Caco-2 (cell line): ENCODE measurements at regions of chr14 and their contacts with region 1.

Region 1: DNA sequence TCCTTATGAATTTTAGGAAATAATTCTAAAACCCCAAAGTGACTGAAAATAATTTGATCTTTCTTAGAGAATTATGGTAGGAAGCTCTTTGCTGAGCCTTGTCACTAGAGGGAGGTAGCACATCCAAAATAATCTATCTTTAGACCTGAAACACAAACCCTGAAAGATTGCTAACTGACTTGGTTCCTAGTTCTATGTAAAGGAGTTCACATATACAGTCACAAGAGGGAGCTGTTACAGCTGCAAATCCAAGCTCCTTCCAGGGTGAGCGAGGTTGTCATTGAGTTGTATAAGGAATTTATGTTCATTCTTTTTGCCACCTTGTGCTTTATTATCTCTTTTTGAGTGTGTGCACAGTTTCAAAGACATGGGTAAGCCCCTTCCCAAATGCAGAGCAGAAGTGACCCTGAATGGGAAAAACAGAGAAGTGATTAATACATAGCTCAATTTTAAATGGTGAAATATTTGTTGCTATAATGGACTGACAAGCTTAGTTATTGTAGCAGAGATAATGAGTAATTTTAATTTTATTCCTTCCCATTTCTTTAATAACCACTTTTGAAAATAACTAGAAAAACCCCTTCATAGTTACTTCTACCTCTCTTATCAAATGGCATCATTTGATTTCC is 387.9 kb downstream of the DAD1 start:
- DNase-seq: peak in 1 of 2 experiments; percentile 57
- H3K4me3 ChIP-seq: no peak overlapping the region
- H3K4me3 Mint-ChIP-seq: no peak overlapping the region
- H3K27ac Mint-ChIP-seq: no peak overlapping the region
- H3K4me1 ChIP-seq: no peaks in the 10 kb centered on the region; the same call in 1 of the 2 replicates
- H3K4me1 Mint-ChIP-seq: no peaks in the 10 kb centered on the region
- H3K27me3 ChIP-seq: no peaks in the 10 kb centered on the region
- H3K27me3 Mint-ChIP-seq: no peaks in the 10 kb centered on the region
- CTCF ChIP-seq: peak; percentile 55 to 84

Region 2: GRCh38 chr14:22122227-22122818 is 78.8 kb before region 1 on chr14:
- CTCF ChIA-PET with region 1: interaction called, 18 read pairs
- POLR2A ChIA-PET with region 1: no interaction called
- intact Hi-C with region 1: no loop called
- DNase-seq: peak; percentile 27 to 37
- H3K4me3 ChIP-seq: no peak overlapping the region
- H3K4me3 Mint-ChIP-seq: no peak overlapping the region
- H3K27ac Mint-ChIP-seq: no peak overlapping the region
- H3K4me1 ChIP-seq: no peaks in the 10 kb centered on the region
- H3K4me1 Mint-ChIP-seq: peaks cover 7% of the 10 kb centered on the region
- H3K27me3 ChIP-seq: no peaks in the 10 kb centered on the region
- H3K27me3 Mint-ChIP-seq: peaks cover 14% of the 10 kb centered on the region
- CTCF ChIP-seq: peak; percentile 27 to 54

Region 3: DNA sequence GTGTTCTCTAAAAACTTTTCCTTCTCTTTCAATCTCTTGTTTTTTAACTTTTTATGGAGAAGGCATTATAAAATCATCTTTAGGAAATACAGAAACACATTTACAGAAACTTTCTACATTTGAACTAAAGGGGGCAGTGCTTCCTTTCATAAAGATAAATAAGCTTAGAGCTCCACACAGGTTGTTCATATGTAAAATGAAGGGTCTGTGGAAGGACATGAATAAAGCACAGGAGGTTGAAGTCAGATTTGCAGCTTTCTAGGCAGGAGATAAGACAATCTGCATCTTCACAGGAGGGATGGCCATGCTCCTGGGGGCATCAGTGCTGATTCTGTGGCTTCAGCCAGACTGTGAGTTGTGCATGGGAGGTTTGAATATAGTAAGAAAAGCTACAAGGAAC is 38.0 kb before region 1 on chr14:
- CTCF ChIA-PET with region 1: interaction called, 22 read pairs
- POLR2A ChIA-PET with region 1: no interaction called
- intact Hi-C with region 1: loop called (anchors 2 kb)
- DNase-seq: no peak
- H3K4me3 ChIP-seq: no peak overlapping the region
- H3K4me3 Mint-ChIP-seq: no peak overlapping the region
- H3K27ac Mint-ChIP-seq: no peak overlapping the region
- H3K4me1 ChIP-seq: peaks cover 8% of the 10 kb centered on the region; the same call in 1 of the 2 replicates
- H3K4me1 Mint-ChIP-seq: no peaks in the 10 kb centered on the region
- H3K27me3 ChIP-seq: no peaks in the 10 kb centered on the region
- H3K27me3 Mint-ChIP-seq: no peaks in the 10 kb centered on the region
- CTCF ChIP-seq: peak; percentile 21 to 35

Region 4: GRCh38 chr14:22265319-22266137 is 64.4 kb after region 1 on chr14:
- CTCF ChIA-PET with region 1: interaction called, 17 read pairs
- POLR2A ChIA-PET with region 1: no interaction called
- intact Hi-C with region 1: no loop called
- DNase-seq: peak; percentile 39 to 59
- H3K4me3 ChIP-seq: no peak overlapping the region
- H3K4me3 Mint-ChIP-seq: peak overlapping the region; percentile 41
- H3K27ac Mint-ChIP-seq: peak overlapping the region; percentile 68
- H3K4me1 ChIP-seq: peaks cover 45% of the 10 kb centered on the region
- H3K4me1 Mint-ChIP-seq: peaks cover 48% of the 10 kb centered on the region
- H3K27me3 ChIP-seq: no peaks in the 10 kb centered on the region
- H3K27me3 Mint-ChIP-seq: no peaks in the 10 kb centered on the region
- CTCF ChIP-seq: peak; percentile 38 to 49

Region 5: GRCh38 chr14:22319526-22320361 is 118.7 kb after region 1 on chr14:
- CTCF ChIA-PET with region 1: interaction called, 16 read pairs
- POLR2A ChIA-PET with region 1: no interaction called
- intact Hi-C with region 1: no loop called
- DNase-seq: peak; percentile 67 to 72
- H3K4me3 ChIP-seq: no peak overlapping the region
- H3K4me3 Mint-ChIP-seq: no peak overlapping the region
- H3K27ac Mint-ChIP-seq: peak overlapping the region; percentile 34
- H3K4me1 ChIP-seq: peaks cover 14% of the 10 kb centered on the region; the same call in 1 of the 2 replicates
- H3K4me1 Mint-ChIP-seq: peaks cover 22% of the 10 kb centered on the region
- H3K27me3 ChIP-seq: no peaks in the 10 kb centered on the region
- H3K27me3 Mint-ChIP-seq: no peaks in the 10 kb centered on the region
- CTCF ChIP-seq: peak; percentile 61 to 69

Region 6: GRCh38 chr14:22375321-22375930 is 174.3 kb after region 1 on chr14:
- CTCF ChIA-PET with region 1: interaction called, 8 read pairs
- POLR2A ChIA-PET with region 1: no interaction called
- intact Hi-C with region 1: loop called (anchors 5 kb)
- DNase-seq: peak in 1 of 2 experiments; percentile 60
- H3K4me3 ChIP-seq: no peak overlapping the region
- H3K4me3 Mint-ChIP-seq: no peak overlapping the region
- H3K27ac Mint-ChIP-seq: no peak overlapping the region
- H3K4me1 ChIP-seq: peaks cover 42% of the 10 kb centered on the region
- H3K4me1 Mint-ChIP-seq: peaks cover 23% of the 10 kb centered on the region
- H3K27me3 ChIP-seq: no peaks in the 10 kb centered on the region
- H3K27me3 Mint-ChIP-seq: no peaks in the 10 kb centered on the region
- CTCF ChIP-seq: peak; percentile 53 to 65